GM10248 (cell line): ENCODE measurements at regions of chr2 and their contacts with region 1.

Region 1: DNA sequence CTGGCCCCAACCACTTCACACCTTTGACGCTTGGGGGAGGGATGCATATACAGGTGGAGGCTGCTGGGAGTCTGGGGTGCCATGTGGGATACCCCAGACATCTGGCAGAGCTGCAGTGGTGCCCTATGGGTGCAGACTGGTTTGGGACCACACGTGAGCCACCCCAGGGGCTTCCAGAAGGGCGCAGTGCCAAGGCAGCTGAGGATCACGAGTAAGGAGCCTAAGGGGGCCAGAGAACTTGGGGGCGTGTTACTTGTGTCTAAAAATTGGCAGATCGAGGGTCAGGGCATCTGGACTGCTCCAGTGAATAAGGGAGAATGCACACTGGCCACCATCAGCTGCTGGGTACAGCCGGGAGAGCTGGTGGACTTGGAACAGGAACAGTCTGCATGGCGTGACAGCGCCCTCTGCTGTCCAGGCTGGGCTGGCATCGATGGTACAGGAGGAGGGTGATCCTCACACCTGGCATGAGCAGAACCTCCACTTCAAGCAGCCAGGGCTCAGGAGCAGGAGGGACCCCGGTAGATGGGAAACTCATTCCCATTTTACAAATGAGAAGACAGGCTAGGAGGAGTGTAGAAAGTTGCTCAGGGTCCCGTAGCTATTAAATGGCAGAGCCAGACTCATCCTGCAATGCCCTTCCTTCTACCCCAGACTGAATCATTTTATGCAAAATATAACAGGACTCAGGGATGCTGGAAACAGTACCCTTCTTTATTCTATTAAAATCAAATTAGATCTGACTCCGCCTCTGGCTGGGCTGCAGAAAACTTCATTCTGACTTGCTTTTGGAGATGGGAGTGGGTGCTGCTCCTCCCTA is 60.4 kb downstream of the ATOH8 start:
- DNase-seq: peak; percentile 89
- CTCF ChIP-seq: peak; percentile 92

Region 2: DNA sequence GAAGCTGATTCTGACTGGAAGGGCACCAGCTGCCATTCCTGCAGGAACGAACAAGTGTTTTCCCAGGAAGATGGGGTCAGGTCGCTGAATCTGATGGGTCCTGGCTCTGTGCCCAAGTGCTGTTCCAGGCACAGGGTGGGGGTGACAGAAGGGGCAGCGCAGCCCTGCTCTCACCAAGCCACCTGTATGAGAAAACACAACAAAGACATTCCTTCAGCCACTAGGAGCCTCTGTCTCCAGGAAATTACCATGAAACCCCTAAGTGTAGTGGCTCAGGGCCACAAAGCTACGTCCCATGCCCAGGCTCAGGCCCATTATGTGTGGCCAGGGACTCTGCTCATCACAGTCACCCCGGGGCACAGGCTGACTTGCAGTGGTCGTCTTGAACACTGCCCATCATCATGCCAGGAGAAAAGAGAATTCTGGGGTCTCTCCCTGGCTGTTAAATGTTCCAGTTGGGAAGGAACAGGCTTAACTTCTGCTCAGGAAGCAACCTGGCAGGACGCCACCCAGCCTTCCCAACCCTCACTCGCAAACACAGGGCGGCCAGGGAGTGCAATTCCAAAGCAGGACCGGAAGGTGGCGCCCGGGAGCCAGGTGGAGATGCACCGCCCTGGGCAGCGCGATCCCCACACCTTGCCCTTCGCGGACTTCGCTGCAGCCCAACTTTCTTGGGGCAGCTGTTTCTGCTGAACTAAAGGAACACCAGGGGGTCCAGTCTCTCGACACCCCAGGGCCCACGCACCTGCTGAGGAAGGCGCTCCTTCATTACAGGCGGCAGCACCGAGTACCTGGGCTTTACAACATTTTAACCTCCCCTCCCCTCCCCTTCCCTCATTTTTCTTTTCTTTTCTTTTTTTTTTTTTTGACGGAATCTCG is 135.2 kb before region 1 on chr2:
- CTCF ChIA-PET with region 1: interaction called, 21 read pairs
- POLR2A ChIA-PET with region 1: no interaction called
- DNase-seq: peak; percentile 91
- CTCF ChIP-seq: peak; percentile 99

Region 3: DNA sequence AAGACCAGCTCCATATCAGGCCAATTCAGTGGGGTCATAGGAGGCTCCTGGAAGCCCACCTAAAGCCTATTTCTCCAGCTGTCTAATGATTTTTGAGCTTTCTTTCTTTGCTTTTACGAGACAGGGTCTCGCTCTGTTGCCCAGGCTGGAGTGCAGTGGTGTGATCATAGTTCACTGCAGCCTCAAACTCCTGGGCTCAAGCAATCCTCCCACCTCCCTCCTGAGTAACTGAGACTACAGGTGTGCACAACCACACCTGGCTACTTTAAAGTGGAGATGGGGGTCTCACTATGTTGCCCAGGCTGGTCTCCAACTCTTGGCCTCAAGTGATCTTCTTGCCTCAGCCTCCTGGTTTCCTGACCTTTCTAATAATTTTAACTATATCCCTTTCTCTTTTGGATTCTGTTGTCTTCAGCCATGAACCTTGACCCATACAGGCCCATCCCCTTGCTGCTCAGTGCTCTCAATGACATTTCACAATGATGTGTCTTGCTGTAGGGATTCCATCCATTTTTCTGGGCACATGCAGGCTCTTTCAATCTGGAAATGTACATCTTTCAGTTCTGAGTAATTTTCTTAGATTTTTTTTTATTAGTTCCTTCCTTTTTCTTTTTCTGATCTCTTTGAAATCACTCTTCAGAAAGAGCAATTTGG is 90.4 kb before region 1 on chr2:
- CTCF ChIA-PET with region 1: interaction called, 140 read pairs
- POLR2A ChIA-PET with region 1: no interaction called
- DNase-seq: no peak
- CTCF ChIP-seq: no peak

Region 4: GRCh38 chr2:85741833-85742455 is 72.2 kb before region 1 on chr2:
- CTCF ChIA-PET with region 1: interaction called, 14 read pairs
- POLR2A ChIA-PET with region 1: no interaction called
- DNase-seq: no peak
- CTCF ChIP-seq: no peak

Region 5: DNA sequence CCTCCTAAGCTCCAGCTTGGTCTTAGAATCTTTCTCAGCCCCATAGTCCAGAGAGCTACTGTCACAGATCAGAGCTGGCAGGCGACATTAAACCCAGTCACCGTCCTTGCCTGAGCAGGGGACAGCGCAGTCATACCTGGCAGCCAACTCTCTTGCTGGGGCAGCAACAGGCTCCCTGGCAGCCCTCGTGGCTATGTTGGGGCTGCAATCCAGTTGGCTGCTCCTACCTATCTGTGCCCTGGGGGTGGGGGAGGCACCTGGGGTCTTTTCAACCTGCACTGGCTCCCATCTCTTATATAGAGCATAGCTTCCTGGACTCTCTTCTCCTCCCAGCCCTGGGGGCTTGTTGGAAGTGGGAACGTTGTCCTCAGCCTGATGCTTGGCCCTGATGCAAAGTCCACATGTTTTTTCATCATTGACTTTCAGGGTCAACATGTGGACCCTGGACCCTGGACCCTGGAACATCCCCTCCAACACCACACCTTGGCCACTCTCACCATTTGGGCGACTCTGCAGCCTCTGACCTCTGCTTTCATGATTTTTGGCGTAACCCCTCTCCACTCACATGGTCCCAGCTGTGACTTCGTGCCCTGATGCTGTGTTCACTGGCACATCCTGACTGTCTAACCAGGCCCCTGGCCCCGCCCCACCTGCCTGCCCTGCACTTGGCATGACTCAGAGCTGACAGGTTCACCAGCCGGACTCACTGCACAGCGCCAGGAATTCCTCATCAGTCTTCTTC is 14.8 kb before region 1 on chr2:
- CTCF ChIA-PET with region 1: interaction called, 23 read pairs
- POLR2A ChIA-PET with region 1: no interaction called
- DNase-seq: no peak
- CTCF ChIP-seq: no peak